OCI-LY7 (cell line): ENCODE measurements at regions of chr11 and their contacts with region 1.

Region 1: DNA sequence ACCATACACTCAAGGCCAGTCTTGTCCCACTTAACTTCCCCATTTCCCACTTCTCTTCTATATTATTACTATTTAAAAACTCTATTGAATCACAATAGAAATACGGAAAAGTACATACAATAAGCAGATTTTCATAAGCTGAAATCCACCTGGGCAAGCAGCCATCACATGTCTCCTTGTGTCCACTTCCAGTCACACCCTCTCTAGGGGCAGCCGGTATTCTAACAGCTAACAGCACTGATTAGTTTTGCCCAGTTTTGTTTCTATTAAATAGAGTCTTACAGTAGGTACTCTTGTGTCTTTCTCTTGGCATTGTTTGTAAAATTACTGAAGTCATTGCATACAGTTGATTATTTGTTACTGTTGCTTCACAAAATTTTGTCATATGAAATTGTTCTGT is 37.8 kb downstream of the PPP6R3 start:
- DNase-seq: no peak
- H3K4me3 ChIP-seq: no peak overlapping the region
- H3K27ac ChIP-seq: no peak overlapping the region
- H3K4me1 ChIP-seq: peaks cover 56% of the 10 kb centered on the region
- CTCF ChIP-seq: no peak

Region 2: DNA sequence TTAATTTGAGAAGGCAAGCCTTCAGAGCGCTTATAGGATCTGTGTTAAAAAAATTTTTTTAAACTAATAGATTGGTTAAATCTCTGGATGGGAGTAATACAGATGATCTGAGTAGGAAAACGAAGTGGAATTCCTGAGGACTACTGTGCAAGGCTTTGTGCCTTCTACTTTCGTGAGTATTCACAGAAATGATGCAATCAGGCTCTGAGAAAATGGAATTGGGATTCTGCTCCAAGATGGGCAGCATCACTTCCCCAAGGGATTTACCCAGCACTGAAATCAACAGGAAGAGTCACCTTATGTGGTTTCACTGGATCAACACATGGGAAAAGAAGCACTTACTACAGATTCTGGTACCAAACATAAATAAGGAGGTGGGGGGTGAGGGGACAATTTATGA is 297.7 kb before region 1 on chr11:
- CTCF ChIA-PET with region 1: no interaction called
- POLR2A ChIA-PET with region 1: no interaction called
- intact Hi-C with region 1: no loop called
- DNase-seq: no peak
- H3K4me3 ChIP-seq: no peak overlapping the region
- H3K27ac ChIP-seq: no peak overlapping the region
- H3K4me1 ChIP-seq: peaks cover 20% of the 10 kb centered on the region
- CTCF ChIP-seq: no peak

Region 3: DNA sequence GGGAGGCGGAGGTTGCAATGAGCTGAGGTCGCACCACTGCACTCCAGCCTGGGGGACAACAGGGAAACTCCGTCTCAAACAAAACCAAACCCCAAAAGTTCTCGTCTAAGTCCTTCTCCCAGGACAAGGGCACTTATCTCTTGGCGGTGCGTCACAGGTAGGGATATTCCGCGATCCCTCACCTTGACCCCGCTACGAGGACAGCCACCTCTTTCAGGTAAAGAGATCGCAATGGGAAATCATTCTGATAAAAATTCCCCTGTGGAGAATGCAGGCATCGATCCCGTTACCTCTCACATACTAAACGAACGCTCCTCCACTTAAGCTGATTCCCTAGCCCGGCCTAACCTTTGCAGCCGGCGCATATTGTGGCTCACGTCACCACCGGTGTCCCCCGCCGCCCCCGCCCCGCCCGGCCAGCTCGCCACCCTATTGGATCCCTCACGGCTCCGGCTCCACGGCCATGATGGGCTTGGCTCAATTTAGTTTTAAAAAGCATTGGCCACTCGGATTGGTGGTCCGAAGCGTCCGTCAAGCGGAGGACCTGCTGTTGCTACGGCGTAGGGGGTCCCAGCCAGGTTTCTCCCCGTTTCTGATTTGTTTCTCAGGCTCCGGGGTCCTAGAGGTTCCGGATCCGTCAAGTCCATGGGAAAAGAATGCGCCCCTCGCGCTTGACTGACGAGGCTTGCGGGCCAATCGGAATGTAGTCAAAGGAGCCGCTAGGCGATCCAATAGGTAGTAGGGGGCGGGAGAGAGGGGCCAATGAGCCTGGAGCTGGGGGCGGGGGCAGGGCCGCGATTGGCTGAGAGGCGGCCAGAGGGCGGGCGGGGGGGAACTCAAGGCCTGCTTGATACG is 38.2 kb before region 1 on chr11:
- CTCF ChIA-PET with region 1: no interaction called
- POLR2A ChIA-PET with region 1: interaction called, 7 read pairs
- intact Hi-C with region 1: loop called (anchors 5 kb)
- DNase-seq: peak; percentile 98
- H3K4me3 ChIP-seq: peak overlapping the region; percentile 80
- H3K27ac ChIP-seq: peak overlapping the region; percentile 66
- H3K4me1 ChIP-seq: peaks cover 37% of the 10 kb centered on the region
- CTCF ChIP-seq: no peak